MCF 10A (cell line): ENCODE measurements at regions of chr14 and their contacts with region 1.

Region 1: DNA sequence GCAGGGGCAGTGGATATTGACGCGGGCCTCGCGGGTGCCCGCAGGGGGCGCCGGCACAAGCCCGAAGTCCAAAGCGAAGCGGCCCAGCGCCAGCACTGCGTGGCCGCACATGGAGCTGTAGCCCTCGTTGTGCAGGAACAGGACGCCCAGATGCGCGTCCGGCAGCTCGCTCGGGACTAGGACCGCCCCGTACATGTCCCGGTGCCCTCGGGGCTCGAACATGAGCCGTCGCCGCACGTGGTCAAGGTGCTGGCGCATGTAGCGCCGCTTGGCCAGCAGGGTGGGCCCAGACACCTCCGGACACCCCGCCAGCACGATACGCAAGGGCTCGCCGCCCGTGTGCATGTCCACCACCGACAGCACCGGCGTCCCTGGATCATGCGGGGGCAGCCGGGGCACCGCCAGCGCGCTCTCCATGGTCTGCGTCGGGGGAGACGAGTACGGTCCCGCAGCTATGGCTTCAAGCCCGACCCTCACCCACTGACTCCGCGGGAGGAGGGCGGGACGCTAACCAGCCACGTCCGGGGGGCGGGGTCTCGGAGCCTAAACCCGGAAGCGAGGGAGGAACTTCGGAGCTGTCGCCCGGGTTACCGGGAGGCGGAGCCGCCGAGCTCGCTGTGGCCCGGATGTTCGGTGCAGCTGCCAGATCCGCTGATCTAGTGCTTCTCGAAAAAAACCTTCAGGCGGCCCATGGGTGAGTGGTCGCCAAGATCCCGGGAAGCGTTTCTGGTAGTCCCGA is at the starts of genes JKAMP and L3HYPDH:
- DNase-seq: peak; percentile 96
- H3K4me3 Mint-ChIP-seq: peak within 1 kb of the TSS; percentile 89
- H3K27ac Mint-ChIP-seq: peak within 1 kb of the TSS; percentile 86
- H3K4me1 Mint-ChIP-seq: peaks cover 37% of the 10 kb centered on the region
- H3K27me3 Mint-ChIP-seq: no peaks in the 10 kb centered on the region
- CTCF ChIP-seq: peak; percentile 54
- total RNA-seq, gene JKAMP: 29.7 and 35.8 TPM in 2 replicates
- total RNA-seq, gene L3HYPDH: 32.5 and 35.0 TPM in 2 replicates

Region 2: GRCh38 chr14:59281613-59282377 is 202.3 kb before region 1 on chr14:
- CTCF ChIA-PET with region 1: no interaction called
- POLR2A ChIA-PET with region 1: interaction called, 4 read pairs
- intact Hi-C with region 1: loop called (anchors 5 kb)
- DNase-seq: peak; percentile 80
- H3K4me3 Mint-ChIP-seq: peak overlapping the region; percentile 43
- H3K27ac Mint-ChIP-seq: peak overlapping the region; percentile 61
- H3K4me1 Mint-ChIP-seq: peaks cover 46% of the 10 kb centered on the region
- H3K27me3 Mint-ChIP-seq: no peaks in the 10 kb centered on the region
- CTCF ChIP-seq: no peak

Region 3: GRCh38 chr14:59464486-59465315 is 19.4 kb before region 1 on chr14:
- CTCF ChIA-PET with region 1: no interaction called
- POLR2A ChIA-PET with region 1: interaction called, 18 read pairs
- intact Hi-C with region 1: no loop called
- DNase-seq: no peak
- H3K4me3 Mint-ChIP-seq: no peak overlapping the region
- H3K27ac Mint-ChIP-seq: no peak overlapping the region
- H3K4me1 Mint-ChIP-seq: no peaks in the 10 kb centered on the region
- H3K27me3 Mint-ChIP-seq: no peaks in the 10 kb centered on the region
- CTCF ChIP-seq: no peak

Region 4: DNA sequence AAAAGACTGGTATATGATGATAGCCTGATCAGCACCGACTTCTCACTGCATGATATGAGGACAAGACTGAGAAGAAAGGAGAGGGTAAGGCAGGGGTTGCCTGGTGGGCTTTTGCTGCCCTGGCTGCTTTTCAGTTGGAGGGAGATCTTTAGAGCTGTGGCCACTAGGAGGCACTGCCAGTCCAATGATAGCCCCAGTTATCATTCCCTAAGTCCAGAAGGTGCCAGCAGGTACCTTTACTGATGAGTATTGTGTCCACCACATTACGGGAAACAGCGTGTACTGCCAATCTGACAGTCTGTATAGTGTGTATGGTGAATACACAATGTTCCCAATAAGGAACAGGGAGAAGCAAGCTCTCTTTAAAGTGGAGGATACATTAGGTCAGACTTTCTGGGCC is 148.3 kb after region 1 on chr14:
- CTCF ChIA-PET with region 1: no interaction called
- POLR2A ChIA-PET with region 1: no interaction called
- intact Hi-C with region 1: no loop called
- DNase-seq: peak; percentile 65
- H3K4me3 Mint-ChIP-seq: no peak overlapping the region
- H3K27ac Mint-ChIP-seq: no peak overlapping the region
- H3K4me1 Mint-ChIP-seq: peaks cover 21% of the 10 kb centered on the region
- H3K27me3 Mint-ChIP-seq: no peaks in the 10 kb centered on the region
- CTCF ChIP-seq: peak; percentile 80

Region 5: GRCh38 chr14:59698793-59699192 is 214.7 kb after region 1 on chr14:
- CTCF ChIA-PET with region 1: no interaction called
- POLR2A ChIA-PET with region 1: interaction called, 19 read pairs
- intact Hi-C with region 1: loop called (anchors 5 kb)
- DNase-seq: peak; percentile 92
- H3K4me3 Mint-ChIP-seq: peak overlapping the region; percentile 53
- H3K27ac Mint-ChIP-seq: peak overlapping the region; percentile 98
- H3K4me1 Mint-ChIP-seq: peaks cover 48% of the 10 kb centered on the region
- H3K27me3 Mint-ChIP-seq: no peaks in the 10 kb centered on the region
- CTCF ChIP-seq: no peak

Region 6: DNA sequence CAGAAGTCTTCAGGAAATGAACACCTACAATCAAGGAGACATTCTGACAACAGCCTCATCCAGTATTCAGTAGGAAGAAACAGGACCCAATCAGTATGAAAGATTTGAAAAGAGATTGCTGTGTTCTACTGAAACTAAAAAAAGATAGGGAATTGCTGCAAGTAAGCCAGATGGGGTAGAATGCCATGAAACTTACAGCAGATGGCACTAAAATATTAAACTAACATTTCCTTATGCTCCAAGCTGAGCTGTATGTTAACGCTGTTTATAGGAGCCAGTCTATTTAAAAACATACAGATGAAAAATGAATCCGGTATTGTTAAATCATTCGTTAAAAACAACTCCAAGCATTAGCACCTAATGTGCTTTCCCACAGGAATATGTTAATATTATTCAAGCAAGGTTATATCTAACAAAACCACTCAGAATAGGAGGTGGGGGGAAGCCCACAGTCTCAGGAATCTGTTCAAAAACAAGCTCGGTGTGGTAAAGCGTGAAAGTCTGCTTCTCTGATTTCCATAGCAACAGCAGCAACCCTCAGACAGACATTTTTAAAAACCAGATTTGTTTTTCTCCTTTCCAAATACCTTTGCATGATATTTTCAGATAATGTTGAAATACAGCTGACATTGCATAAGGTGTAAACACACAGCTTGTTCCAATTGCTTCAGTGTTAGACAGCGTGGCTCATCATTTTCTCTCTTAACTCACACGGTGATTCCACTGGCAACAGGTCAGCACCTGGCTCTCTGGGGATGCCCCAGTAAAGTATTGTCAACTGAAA is 223.9 kb after region 1 on chr14:
- CTCF ChIA-PET with region 1: interaction called, 5 read pairs
- POLR2A ChIA-PET with region 1: interaction called, 12 read pairs
- intact Hi-C with region 1: no loop called
- DNase-seq: peak; percentile 61
- H3K4me3 Mint-ChIP-seq: peak overlapping the region; percentile 2
- H3K27ac Mint-ChIP-seq: peak overlapping the region; percentile 95
- H3K4me1 Mint-ChIP-seq: peaks cover 37% of the 10 kb centered on the region
- H3K27me3 Mint-ChIP-seq: no peaks in the 10 kb centered on the region
- CTCF ChIP-seq: peak; percentile 22